HCT116 (cell line): ENCODE measurements at regions of chr7 and their contacts with region 1.

Region 1: DNA sequence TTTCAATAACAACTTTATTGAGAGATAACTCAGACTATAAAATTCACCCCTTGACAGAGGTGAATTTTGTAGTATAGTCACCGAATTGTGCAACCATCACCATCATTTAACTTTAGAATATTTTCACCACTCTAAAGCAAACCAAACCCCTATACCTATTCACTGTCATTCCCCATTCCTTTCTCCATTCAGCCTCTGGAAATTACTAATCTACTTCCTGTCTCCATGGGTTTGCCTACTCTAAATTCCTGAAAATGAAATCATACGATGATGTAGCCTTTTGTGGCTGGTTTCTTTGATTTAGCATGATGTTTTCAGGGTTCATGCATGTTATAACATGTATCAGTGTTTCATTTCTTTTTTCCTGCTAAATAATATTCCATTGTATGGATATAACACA is 15.6 kb upstream of the LMTK2 start:
- DNase-seq: no peak
- ATAC-seq: no peak
- H3K4me3 ChIP-seq: no peak overlapping the region
- H3K27ac ChIP-seq: no peak overlapping the region
- H3K4me1 ChIP-seq: no peaks in the 10 kb centered on the region
- H3K27me3 ChIP-seq: no peaks in the 10 kb centered on the region
- CTCF ChIP-seq: no peak
- POLR2A ChIP-seq: no peak
- RAD21 ChIP-seq: no peak

Region 2: GRCh38 chr7:98116656-98117461 is 25.8 kb after region 1 on chr7:
- CTCF ChIA-PET with region 1: no interaction called
- POLR2A ChIA-PET with region 1: no interaction called
- RAD21 ChIA-PET with region 1: no interaction called
- intact Hi-C with region 1: loop called (anchors 1 kb)
- DNase-seq: no peak
- ATAC-seq: 0 out of 2 replicates have a peak, but pooled peaks have one; percentile 32
- H3K4me3 ChIP-seq: no peak overlapping the region
- H3K27ac ChIP-seq: no peak overlapping the region
- H3K4me1 ChIP-seq: peaks cover 6 to 21% of the 10 kb centered on the region in 2 experiments
- H3K27me3 ChIP-seq: no peaks in the 10 kb centered on the region
- CTCF ChIP-seq: no peak
- POLR2A ChIP-seq: no peak
- RAD21 ChIP-seq: no peak

Region 3: GRCh38 chr7:98266840-98267239 is 175.8 kb after region 1 on chr7:
- CTCF ChIA-PET with region 1: no interaction called
- POLR2A ChIA-PET with region 1: no interaction called
- RAD21 ChIA-PET with region 1: no interaction called
- intact Hi-C with region 1: no loop called
- DNase-seq: no peak
- ATAC-seq: peak; percentile 53; the same call in 1 of the 2 replicates
- H3K4me3 ChIP-seq: no peak overlapping the region
- H3K27ac ChIP-seq: no peak overlapping the region
- H3K4me1 ChIP-seq: peaks cover 6 to 11% of the 10 kb centered on the region in 2 experiments
- H3K27me3 ChIP-seq: no peaks in the 10 kb centered on the region
- CTCF ChIP-seq: peak; percentile 19 to 48 (median 29); a peak in 3 of 6 replicates
- POLR2A ChIP-seq: no peak
- RAD21 ChIP-seq: peak; percentile 56